IMR-90 (cell line): ENCODE measurements at regions of chr18 and their contacts with region 1.

Region 1: GRCh38 chr18:70082430-70082829 is 123.1 kb downstream of the RTTN start:
- DNase-seq: no peak
- ATAC-seq: no peak
- H3K4me3 ChIP-seq: no peak overlapping the region
- H3K27ac ChIP-seq: no peak overlapping the region
- H3K4me1 ChIP-seq: peaks cover 1% of the 10 kb centered on the region; the same call in 1 of the 2 replicates
- H3K27me3 ChIP-seq: no peaks in the 10 kb centered on the region
- CTCF ChIP-seq: no peak
- POLR2A ChIP-seq: no peak
- RAD21 ChIP-seq: no peak

Region 2: GRCh38 chr18:69400253-69400975 is 682.0 kb before region 1 on chr18 and contains the start of gene DOK6:
- CTCF ChIA-PET with region 1: no interaction called
- POLR2A ChIA-PET with region 1: no interaction called
- dilution Hi-C with region 1: no loop called
- in situ Hi-C with region 1: no loop called
- intact Hi-C with region 1: loop called (anchors 2 kb)
- DNase-seq: peak; percentile 69
- ATAC-seq: peak; percentile 84
- H3K4me3 ChIP-seq: peak within 1 kb of the TSS; percentile 42
- H3K27ac ChIP-seq: peak within 1 kb of the TSS; percentile 51; the same call in 1 of the 2 replicates
- H3K4me1 ChIP-seq: no peaks in the 10 kb centered on the region
- H3K27me3 ChIP-seq: peaks cover 10% of the 10 kb centered on the region
- CTCF ChIP-seq: no peak
- POLR2A ChIP-seq: no peak
- RAD21 ChIP-seq: no peak
- total RNA-seq, gene DOK6: 2.7 and 3.9 TPM in 2 replicates

Region 3: DNA sequence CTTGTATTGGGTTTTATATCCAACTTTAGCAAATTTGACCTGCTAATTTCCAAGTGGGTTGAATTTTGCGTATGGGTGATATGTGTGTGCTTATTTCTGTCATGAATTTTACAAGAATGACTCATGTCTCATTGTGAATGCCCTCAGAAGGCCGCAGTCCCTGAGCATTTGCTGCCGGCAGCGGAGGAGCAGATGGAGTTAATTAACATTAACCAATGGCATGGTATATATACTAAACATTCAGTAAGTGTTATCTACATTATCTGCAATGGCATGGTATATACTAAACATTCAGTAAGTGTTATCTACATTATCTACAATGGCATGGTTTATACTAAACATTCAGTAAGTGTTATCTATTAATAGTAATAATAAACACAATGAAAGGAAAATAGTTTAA is 591.6 kb before region 1 on chr18:
- CTCF ChIA-PET with region 1: no interaction called
- POLR2A ChIA-PET with region 1: no interaction called
- dilution Hi-C with region 1: no loop called
- in situ Hi-C with region 1: no loop called
- intact Hi-C with region 1: loop called (anchors 10 kb)
- DNase-seq: peak; percentile 75
- ATAC-seq: peak; percentile 89
- H3K4me3 ChIP-seq: no peak overlapping the region
- H3K27ac ChIP-seq: no peak overlapping the region
- H3K4me1 ChIP-seq: peaks cover 3% of the 10 kb centered on the region
- H3K27me3 ChIP-seq: no peaks in the 10 kb centered on the region
- CTCF ChIP-seq: no peak
- POLR2A ChIP-seq: no peak
- RAD21 ChIP-seq: no peak